A673 (cell line): ENCODE measurements at regions of chr14 and their contacts with region 1.

Region 1: GRCh38 chr14:36070031-36070719 is 106.3 kb downstream of the PTCSC3 start:
- DNase-seq: peak; percentile 71
- H3K4me3 ChIP-seq: no peak overlapping the region
- H3K27ac ChIP-seq: no peak overlapping the region
- H3K4me1 ChIP-seq: peaks cover 7% of the 10 kb centered on the region
- H3K27me3 ChIP-seq: peaks cover 5% of the 10 kb centered on the region
- CTCF ChIP-seq: peak; percentile 88

Region 2: GRCh38 chr14:35883677-35884293 is 186.4 kb before region 1 on chr14:
- CTCF ChIA-PET with region 1: interaction called, 18 read pairs
- POLR2A ChIA-PET with region 1: no interaction called
- intact Hi-C with region 1: loop called (anchors 2 kb)
- DNase-seq: peak; percentile 59
- H3K4me3 ChIP-seq: no peak overlapping the region
- H3K27ac ChIP-seq: no peak overlapping the region
- H3K4me1 ChIP-seq: peaks cover 13% of the 10 kb centered on the region
- H3K27me3 ChIP-seq: no peaks in the 10 kb centered on the region
- CTCF ChIP-seq: peak; percentile 89

Region 3: GRCh38 chr14:35909665-35910064 is 160.5 kb before region 1 on chr14:
- CTCF ChIA-PET with region 1: no interaction called
- POLR2A ChIA-PET with region 1: no interaction called
- intact Hi-C with region 1: no loop called
- DNase-seq: no peak
- H3K4me3 ChIP-seq: no peak overlapping the region
- H3K27ac ChIP-seq: no peak overlapping the region
- H3K4me1 ChIP-seq: no peaks in the 10 kb centered on the region
- H3K27me3 ChIP-seq: no peaks in the 10 kb centered on the region
- CTCF ChIP-seq: no peak

Region 4: GRCh38 chr14:35963209-35963608 is 107.0 kb before region 1 on chr14:
- CTCF ChIA-PET with region 1: interaction called, 7 read pairs
- POLR2A ChIA-PET with region 1: no interaction called
- intact Hi-C with region 1: loop called (anchors 2 kb)
- DNase-seq: peak; percentile 31
- H3K4me3 ChIP-seq: no peak overlapping the region
- H3K27ac ChIP-seq: no peak overlapping the region
- H3K4me1 ChIP-seq: no peaks in the 10 kb centered on the region
- H3K27me3 ChIP-seq: no peaks in the 10 kb centered on the region
- CTCF ChIP-seq: peak; percentile 51